ENCODE measurements at regions of chr15 and their contacts with region 1.

Region 1: GRCh38 chr15:31458591-31459399 is 132.2 kb downstream of the KLF13 start:
- DNase-seq: peak; percentile 81
- CTCF ChIP-seq: no peak

Region 2: GRCh38 chr15:31442203-31443111 is 16.3 kb before region 1 on chr15:
- CTCF ChIA-PET with region 1: interaction called, 36 read pairs
- POLR2A ChIA-PET with region 1: interaction called, 3 read pairs
- DNase-seq: no peak
- CTCF ChIP-seq: no peak

Region 3: GRCh38 chr15:31554261-31554660 is 95.5 kb after region 1 on chr15:
- CTCF ChIA-PET with region 1: no interaction called
- POLR2A ChIA-PET with region 1: no interaction called
- DNase-seq: no peak
- CTCF ChIP-seq: no peak

Measured in GM10248 (cell line).